H1 (cell line): ENCODE measurements at regions of chr2 and their contacts with region 1.

Region 1: GRCh38 chr2:33380001-33380609 is 96.3 kb upstream of the RASGRP3 start:
- DNase-seq: no peak
- H3K4me3 ChIP-seq: no peak overlapping the region
- H3K27ac ChIP-seq: no peak overlapping the region
- H3K4me1 ChIP-seq: peaks cover 0 to 2% (median 0%) of the 10 kb centered on the region in 4 experiments; a peak in 1 of 7 replicates
- H3K27me3 ChIP-seq: no peaks in the 10 kb centered on the region
- CTCF ChIP-seq: peak in 2 of 3 experiments; percentile 66 to 81; a peak in 3 of 4 replicates
- EP300 ChIP-seq: no peak
- POLR2A ChIP-seq: no peak
- RAD21 ChIP-seq: peak; percentile 88 to 92

Region 2: GRCh38 chr2:32772638-32773447 is 607.3 kb before region 1 on chr2:
- CTCF ChIA-PET with region 1: interaction called, 27 read pairs
- POLR2A ChIA-PET with region 1: no interaction called
- DNase-seq: peak; percentile 5 to 48
- H3K4me3 ChIP-seq: no peak overlapping the region
- H3K27ac ChIP-seq: no peak overlapping the region
- H3K4me1 ChIP-seq: peaks cover 0 to 9% (median 3%) of the 10 kb centered on the region in 4 experiments; a peak in 2 of 7 replicates
- H3K27me3 ChIP-seq: no peaks in the 10 kb centered on the region
- CTCF ChIP-seq: peak in 2 of 3 experiments; percentile 66; a peak in 3 of 4 replicates
- EP300 ChIP-seq: no peak
- POLR2A ChIP-seq: no peak
- RAD21 ChIP-seq: peak; percentile 97

Region 3: DNA sequence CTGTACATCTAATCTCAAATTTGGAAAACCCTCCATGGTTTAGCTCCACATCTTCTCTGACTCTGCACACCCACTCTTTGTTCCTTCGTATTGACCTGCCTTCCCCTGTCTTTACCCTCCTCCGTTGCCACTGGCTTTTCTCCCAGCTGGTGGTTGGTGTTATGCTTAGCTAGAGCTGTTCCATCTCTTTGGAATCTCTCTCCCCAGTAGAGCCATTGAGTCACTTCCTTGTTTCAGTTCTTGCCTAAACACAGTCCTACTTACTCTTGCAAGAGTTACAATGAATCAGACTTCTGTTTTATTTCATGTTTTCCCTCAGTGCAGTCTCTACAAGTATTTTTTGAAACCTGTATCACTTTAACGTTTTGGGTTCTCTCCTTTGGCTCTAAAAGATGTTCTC is 169.5 kb before region 1 on chr2:
- CTCF ChIA-PET with region 1: no interaction called
- POLR2A ChIA-PET with region 1: no interaction called
- DNase-seq: no peak
- H3K4me3 ChIP-seq: no peak overlapping the region
- H3K27ac ChIP-seq: no peak overlapping the region
- H3K4me1 ChIP-seq: peaks cover 0 to 2% (median 0%) of the 10 kb centered on the region in 4 experiments; a peak in 2 of 7 replicates
- H3K27me3 ChIP-seq: no peaks in the 10 kb centered on the region
- CTCF ChIP-seq: no peak
- EP300 ChIP-seq: no peak
- POLR2A ChIP-seq: no peak
- RAD21 ChIP-seq: no peak

Region 4: DNA sequence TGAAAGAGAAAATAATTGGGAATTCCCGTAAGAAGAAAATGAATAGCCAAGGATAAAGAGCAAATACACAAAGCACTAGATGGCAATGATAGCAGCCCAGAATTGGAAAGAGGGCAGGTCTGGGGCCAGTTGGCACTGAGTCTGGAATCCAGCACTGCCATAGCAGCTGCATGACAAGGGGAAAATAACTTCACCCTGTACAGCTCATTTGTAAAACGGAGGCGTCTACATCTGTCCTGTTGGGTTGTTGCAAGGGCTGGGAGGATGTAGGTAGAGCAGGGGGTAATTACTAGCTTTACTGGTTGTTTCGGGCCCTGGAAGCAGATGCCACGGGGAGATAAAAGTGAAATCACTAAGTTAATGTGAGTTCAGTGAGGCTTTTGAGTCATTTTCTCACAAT is 13.6 kb before region 1 on chr2:
- CTCF ChIA-PET with region 1: interaction called, 60 read pairs
- POLR2A ChIA-PET with region 1: no interaction called
- DNase-seq: no peak
- H3K4me3 ChIP-seq: no peak overlapping the region
- H3K27ac ChIP-seq: no peak overlapping the region
- H3K4me1 ChIP-seq: no peaks in the 10 kb centered on the region
- H3K27me3 ChIP-seq: no peaks in the 10 kb centered on the region
- CTCF ChIP-seq: no peak
- EP300 ChIP-seq: no peak
- POLR2A ChIP-seq: no peak
- RAD21 ChIP-seq: no peak

Region 5: DNA sequence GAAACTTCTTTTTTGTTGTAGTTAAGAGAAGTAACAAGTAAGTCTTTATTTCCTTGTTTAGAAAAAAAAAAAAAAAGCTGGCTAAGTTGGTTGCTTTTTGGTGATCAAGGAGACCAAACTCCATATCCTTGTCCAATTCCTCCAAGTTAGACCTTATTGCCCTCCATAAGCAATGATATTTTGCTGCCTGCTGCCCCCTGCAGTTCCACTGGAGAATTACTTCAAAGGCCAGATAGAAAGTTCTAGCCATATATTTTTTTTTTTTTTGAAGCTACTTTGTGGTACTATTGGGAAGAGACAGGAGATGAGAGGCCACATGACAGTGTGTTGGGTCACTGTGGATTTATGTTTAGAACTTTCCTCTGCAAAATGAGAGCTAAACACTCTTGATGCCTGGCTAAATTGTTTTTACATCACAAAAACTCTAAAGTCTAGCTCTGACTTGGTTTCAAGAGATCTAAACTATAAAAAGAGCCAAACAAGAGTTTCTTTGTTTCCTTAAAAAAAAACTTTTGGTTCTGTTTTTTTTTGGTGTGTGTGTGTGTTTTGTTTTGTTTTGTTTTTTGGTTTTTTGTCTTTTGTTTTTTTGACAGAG is 15.6 kb after region 1 on chr2:
- CTCF ChIA-PET with region 1: interaction called, 27 read pairs
- POLR2A ChIA-PET with region 1: no interaction called
- DNase-seq: peak in 1 of 2 experiments; percentile 64
- H3K4me3 ChIP-seq: no peak overlapping the region
- H3K27ac ChIP-seq: no peak overlapping the region
- H3K4me1 ChIP-seq: peaks cover 0 to 5% (median 1%) of the 10 kb centered on the region in 4 experiments; a peak in 1 of 7 replicates
- H3K27me3 ChIP-seq: peaks cover 0 to 4% (median 3%) of the 10 kb centered on the region in 4 experiments; a peak in 2 of 7 replicates
- CTCF ChIP-seq: peak in 2 of 3 experiments; percentile 51 to 55; a peak in 2 of 4 replicates
- EP300 ChIP-seq: no peak
- POLR2A ChIP-seq: no peak
- RAD21 ChIP-seq: peak; percentile 51 to 58

Region 6: DNA sequence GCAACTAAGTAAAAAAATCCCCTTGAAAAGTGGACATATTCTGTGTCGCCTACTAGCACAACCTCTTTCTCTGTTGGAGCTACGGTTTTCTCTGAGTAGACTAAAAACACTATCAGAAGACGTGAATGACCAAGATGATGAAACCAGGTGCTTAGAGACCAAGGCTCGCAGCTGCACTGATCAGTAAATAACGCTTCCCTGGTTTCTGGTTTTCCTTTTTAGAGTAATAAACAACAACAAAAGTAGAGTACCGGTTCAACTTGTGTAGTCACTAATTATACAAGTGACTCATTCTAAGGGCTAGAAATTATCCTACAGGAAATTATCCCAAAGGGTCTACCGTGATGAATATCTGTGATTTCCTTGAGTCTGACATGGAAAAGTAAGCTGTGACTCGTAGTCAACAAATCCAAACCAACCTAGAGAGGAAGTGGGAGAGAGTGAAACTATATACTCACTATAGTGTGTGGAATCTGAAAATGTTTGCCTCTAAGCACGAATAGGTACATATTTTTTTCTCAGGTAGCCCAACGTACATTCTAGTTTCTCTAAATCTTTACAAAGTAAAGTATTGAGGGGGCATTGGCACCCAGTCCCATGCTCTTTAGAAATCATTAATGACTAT is 114.2 kb after region 1 on chr2:
- CTCF ChIA-PET with region 1: no interaction called
- POLR2A ChIA-PET with region 1: no interaction called
- DNase-seq: no peak
- H3K4me3 ChIP-seq: no peak overlapping the region
- H3K27ac ChIP-seq: no peak overlapping the region
- H3K4me1 ChIP-seq: no peaks in the 10 kb centered on the region
- H3K27me3 ChIP-seq: no peaks in the 10 kb centered on the region
- CTCF ChIP-seq: no peak
- EP300 ChIP-seq: no peak
- POLR2A ChIP-seq: no peak
- RAD21 ChIP-seq: no peak

Region 7: GRCh38 chr2:33583194-33583938 is 203.3 kb after region 1 on chr2:
- CTCF ChIA-PET with region 1: interaction called, 11 read pairs
- POLR2A ChIA-PET with region 1: no interaction called
- DNase-seq: no peak
- H3K4me3 ChIP-seq: peak overlapping the region in 1 of 4 experiments; percentile 41; a peak in 2 of 8 replicates
- H3K27ac ChIP-seq: peak overlapping the region; percentile 4; the same call in 1 of the 2 replicates
- H3K4me1 ChIP-seq: peaks cover 0 to 11% (median 7%) of the 10 kb centered on the region in 4 experiments; a peak in 6 of 7 replicates
- H3K27me3 ChIP-seq: no peaks in the 10 kb centered on the region
- CTCF ChIP-seq: peak in 2 of 3 experiments; percentile 49 to 54; a peak in 2 of 4 replicates
- EP300 ChIP-seq: no peak
- POLR2A ChIP-seq: no peak
- RAD21 ChIP-seq: peak; percentile 82 to 88